AG04450 (cell line): ENCODE measurements at regions of chr7 and their contacts with region 1.

Region 1: DNA sequence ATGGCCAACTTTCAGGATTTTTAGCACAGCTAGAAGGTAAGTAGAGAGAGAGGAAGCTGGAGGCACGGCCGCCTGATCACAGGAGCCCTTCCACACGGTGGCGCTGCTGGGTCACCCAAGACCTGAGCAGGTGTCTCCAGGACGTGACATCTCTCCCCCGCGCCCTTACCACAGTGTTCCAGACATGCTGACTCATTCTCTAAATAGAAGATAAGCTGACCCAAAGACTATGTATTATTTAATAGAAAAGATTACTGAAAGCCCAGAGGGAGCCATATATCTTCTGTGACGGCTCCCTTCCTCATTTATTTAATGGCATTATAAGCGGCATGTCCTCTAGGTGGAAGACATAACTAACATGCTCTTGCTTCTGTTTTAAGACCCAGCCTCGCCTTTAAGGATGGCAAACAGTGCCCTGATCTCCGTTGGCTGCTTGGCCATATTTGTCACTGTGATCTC is 26.0 kb upstream of the MALSU1 start:
- DNase-seq: peak; percentile 81
- H3K4me3 ChIP-seq: no peak overlapping the region
- H3K27ac ChIP-seq: no peak overlapping the region
- H3K27me3 ChIP-seq: peaks cover 22% of the 10 kb centered on the region
- CTCF ChIP-seq: peak; percentile 89

Region 2: GRCh38 chr7:22712999-22713398 is 560.2 kb before region 1 on chr7:
- CTCF ChIA-PET with region 1: no interaction called
- POLR2A ChIA-PET with region 1: no interaction called
- DNase-seq: no peak
- H3K4me3 ChIP-seq: no peak overlapping the region
- H3K27ac ChIP-seq: no peak overlapping the region
- H3K27me3 ChIP-seq: no peaks in the 10 kb centered on the region
- CTCF ChIP-seq: no peak

Region 3: DNA sequence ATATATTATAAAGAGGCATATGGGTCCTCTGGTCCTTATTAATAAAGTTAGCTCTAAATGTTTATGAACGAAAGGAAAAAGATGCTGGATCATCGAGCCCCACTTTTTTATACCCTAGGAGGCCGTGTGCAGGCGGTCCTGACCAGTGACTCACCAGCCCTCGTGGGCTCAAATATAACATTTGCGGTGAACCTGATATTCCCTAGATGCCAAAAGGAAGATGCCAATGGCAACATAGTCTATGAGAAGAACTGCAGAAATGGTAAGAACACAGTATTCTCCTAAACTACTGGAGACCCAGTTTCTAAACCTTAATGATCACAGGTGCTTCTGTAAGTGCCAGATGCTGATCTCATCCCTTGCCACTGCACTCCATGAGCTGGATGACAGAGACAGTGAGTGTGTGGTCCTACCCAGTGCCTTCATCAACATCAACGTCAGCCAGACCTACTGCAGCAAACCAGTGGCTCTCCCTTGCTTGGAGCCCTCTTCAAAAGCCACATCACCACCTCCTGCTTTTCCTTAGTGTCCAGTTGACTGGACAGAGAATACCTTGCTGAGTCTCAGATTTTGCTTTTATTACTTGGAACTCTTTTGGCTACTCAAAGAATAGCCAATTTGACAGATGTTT is 19.0 kb before region 1 on chr7:
- CTCF ChIA-PET with region 1: interaction called, 101 read pairs
- POLR2A ChIA-PET with region 1: no interaction called
- DNase-seq: no peak
- H3K4me3 ChIP-seq: no peak overlapping the region
- H3K27ac ChIP-seq: no peak overlapping the region
- H3K27me3 ChIP-seq: peaks cover 38% of the 10 kb centered on the region
- CTCF ChIP-seq: no peak

Region 4: GRCh38 chr7:23287612-23288011 is 14.4 kb after region 1 on chr7:
- CTCF ChIA-PET with region 1: interaction called, 25 read pairs
- POLR2A ChIA-PET with region 1: no interaction called
- DNase-seq: no peak
- H3K4me3 ChIP-seq: no peak overlapping the region
- H3K27ac ChIP-seq: no peak overlapping the region
- H3K27me3 ChIP-seq: no peaks in the 10 kb centered on the region
- CTCF ChIP-seq: no peak

Region 5: GRCh38 chr7:23462846-23463245 is 189.7 kb after region 1 on chr7:
- CTCF ChIA-PET with region 1: interaction called, 10 read pairs
- POLR2A ChIA-PET with region 1: no interaction called
- DNase-seq: no peak
- H3K4me3 ChIP-seq: no peak overlapping the region
- H3K27ac ChIP-seq: no peak overlapping the region
- H3K27me3 ChIP-seq: no peaks in the 10 kb centered on the region
- CTCF ChIP-seq: peak; percentile 32

Region 6: DNA sequence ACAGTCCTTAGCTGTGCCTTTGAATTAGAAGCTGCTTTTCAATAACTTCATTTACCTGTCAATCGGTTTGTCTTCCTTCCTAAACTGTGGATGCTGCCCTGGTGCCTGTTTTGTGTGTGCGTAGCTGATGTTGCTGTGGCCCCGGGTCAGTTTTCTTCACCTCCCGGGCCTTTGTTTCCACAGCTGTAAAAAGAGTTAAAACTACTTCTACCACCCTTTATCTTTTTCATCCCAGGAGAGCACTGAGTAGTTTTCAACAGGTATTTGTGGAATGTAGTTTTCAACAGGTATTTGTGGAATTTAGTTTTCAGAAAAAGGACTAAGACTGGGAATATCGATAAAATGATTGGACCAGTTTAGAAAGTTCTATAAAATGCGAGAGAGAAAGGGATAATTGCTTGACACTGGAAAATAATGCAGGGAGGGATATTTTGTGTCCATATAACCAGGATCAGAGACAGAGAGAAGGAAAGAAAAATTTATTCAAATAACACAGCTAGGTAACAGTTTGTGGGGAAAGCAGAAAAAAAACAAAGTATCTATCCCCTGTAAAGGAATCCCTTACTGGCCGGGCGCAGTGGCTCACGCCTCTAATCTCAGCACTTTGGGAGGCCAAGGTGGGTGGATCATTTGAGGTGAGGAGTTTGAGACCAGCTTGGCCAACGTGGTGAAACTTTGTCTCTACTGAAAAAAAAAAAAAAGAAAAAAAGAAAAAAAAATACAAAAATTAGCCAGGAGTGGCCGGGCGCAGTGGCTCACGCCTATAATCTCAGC is 213.0 kb after region 1 on chr7:
- CTCF ChIA-PET with region 1: interaction called, 11 read pairs
- POLR2A ChIA-PET with region 1: no interaction called
- DNase-seq: no peak
- H3K4me3 ChIP-seq: no peak overlapping the region
- H3K27ac ChIP-seq: no peak overlapping the region
- H3K27me3 ChIP-seq: no peaks in the 10 kb centered on the region
- CTCF ChIP-seq: no peak

Region 7: DNA sequence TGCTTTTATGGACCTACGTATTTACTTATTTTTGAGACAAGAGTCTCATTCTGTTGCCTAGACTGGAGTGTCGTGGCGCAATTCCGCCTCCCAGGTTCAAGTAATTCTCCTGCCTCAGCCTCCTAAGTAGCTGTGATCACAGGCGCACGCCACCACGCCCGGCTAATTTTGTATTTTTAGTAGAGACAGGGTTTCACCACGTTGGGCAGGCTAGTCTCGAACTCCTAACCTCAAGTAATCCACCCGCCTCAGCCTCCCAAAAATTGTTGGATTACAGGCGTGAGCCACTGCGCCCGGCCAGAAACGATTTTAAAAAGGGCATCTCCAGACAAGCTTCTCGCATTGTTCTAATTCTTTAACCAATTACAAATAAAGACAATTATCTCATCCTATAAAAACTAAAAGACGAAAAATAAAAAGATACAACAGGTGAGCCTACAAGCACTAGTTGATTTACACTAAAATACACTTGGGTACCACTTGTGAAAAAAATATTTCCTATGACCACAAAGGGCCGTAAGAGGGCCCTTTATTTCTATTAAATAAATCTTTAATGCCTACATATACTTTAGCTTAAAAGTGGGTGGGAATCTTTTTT is 256.2 kb after region 1 on chr7:
- CTCF ChIA-PET with region 1: interaction called, 15 read pairs
- POLR2A ChIA-PET with region 1: no interaction called
- DNase-seq: no peak
- H3K4me3 ChIP-seq: peak overlapping the region; percentile 99
- H3K27ac ChIP-seq: no peak overlapping the region
- H3K27me3 ChIP-seq: no peaks in the 10 kb centered on the region
- CTCF ChIP-seq: no peak

Region 8: DNA sequence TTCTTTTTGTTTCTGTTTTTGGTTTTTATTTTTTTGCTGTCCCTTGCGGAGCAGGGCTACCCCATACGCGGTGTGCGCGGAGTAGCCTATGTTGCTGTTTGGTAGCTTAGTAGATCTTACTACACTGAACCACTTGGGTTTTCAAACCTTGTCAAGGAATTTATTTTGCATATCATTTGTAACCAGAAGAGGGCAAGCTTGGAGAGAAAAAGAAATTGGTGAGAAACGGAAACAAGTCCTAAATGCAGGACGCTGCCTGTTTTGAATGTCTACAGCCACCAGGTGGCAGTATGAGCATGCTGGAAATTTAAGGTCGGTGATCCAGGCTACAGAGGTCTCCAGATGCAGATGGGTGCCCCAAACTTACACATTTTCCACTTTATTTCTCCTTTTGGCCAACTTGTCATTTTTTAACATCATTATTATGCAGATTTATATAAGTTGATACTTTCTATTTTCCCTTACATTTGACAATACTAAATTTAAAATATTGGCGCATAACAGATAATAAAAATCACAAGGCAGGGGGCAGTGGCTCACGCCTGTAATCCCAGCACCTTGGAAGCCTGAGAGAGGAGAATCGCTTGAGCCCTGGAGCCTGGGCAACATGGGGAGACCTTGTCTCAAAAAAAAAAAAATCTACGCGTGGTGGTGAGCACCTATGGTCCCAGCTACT is 273.9 kb after region 1 on chr7:
- CTCF ChIA-PET with region 1: interaction called, 17 read pairs
- POLR2A ChIA-PET with region 1: no interaction called
- DNase-seq: peak; percentile 89
- H3K4me3 ChIP-seq: no peak overlapping the region
- H3K27ac ChIP-seq: no peak overlapping the region
- H3K27me3 ChIP-seq: peaks cover 3% of the 10 kb centered on the region
- CTCF ChIP-seq: peak; percentile 97

Region 9: DNA sequence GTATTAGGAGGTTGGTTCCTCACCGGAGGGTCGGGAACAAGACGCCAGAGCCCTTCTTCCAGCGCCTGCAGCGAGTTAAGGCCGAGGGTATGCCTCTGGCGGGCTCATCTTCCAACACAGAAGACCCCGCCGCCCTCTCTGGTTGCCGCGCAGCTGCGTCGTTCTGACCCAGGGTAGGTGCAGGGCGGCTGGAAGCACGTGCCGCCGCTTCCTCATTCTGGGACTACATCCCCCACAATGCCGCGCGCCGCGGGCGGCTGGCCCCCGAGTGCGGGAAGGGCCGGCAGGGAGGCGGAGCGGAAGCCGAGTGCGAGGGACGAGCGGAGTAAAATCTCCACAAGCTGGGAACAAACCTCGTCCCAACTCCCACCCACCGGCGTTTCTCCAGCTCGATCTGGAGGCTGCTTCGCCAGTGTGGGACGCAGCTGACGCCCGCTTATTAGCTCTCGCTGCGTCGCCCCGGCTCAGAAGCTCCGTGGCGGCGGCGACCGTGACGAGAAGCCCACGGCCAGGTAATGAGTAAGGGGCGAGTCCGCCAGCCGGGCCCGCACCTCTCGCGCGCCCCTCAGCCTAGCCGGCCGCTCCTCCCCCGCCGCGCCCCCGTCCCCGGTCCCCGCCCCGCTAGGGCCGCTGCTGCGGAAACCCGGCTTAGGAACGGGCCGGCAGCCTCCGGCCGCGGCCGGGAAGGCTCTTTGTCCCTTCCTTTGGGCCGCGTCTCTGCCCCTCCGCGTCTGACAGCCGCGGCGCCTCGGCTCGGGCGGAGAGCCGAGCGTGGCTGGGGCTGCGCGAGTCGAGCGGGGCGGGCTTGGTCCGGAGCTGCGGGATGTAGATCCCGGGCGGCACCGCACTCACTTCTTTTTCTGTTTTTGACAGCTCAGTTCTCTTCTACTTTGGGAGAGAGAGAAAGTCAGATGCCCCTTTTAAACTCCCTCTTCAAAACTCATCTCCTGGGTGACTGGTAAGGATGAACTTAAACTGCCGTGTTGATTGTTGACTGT is 324.2 kb after region 1 on chr7 and contains the start of gene CCDC126:
- CTCF ChIA-PET with region 1: no interaction called
- POLR2A ChIA-PET with region 1: no interaction called
- DNase-seq: peak; percentile 72
- H3K4me3 ChIP-seq: peak within 1 kb of the TSS; percentile 80
- H3K27ac ChIP-seq: peak within 1 kb of the TSS; percentile 80
- H3K27me3 ChIP-seq: no peaks in the 10 kb centered on the region
- CTCF ChIP-seq: no peak
- polyA plus RNA-seq, gene CCDC126: 5.7 and 7.6 TPM in 2 replicates

Region 10: DNA sequence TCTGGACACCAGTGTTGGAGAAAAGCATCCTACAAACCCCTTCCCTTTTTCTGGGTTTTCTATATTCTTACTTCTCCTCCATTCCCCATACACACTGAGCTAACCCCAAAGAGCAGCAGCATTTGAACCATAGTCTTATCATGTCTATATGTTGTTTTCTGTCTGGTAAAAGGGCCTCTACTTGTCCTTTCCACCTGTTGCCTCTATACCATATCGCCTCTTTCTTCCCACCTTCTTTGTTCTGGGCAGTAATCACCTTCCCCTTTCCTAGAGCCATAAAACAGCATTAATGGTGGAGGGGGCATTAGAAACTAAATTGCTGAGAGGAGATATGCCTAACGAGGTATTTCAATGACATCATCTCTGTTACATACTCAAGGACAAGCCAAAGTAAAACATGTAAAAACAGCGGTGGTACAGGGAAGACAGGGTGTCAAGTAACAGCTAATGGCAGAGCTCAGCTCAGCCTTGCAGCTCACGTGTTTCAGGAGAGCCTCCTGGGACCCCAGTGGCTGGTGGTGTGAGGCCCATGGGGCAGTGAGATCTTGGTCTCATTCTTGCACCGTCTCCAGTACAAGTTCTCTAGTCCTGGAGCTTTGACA is 1031.4 kb after region 1 on chr7:
- CTCF ChIA-PET with region 1: no interaction called
- POLR2A ChIA-PET with region 1: no interaction called
- DNase-seq: no peak
- H3K4me3 ChIP-seq: no peak overlapping the region
- H3K27ac ChIP-seq: no peak overlapping the region
- H3K27me3 ChIP-seq: peaks cover 4% of the 10 kb centered on the region
- CTCF ChIP-seq: no peak